Activated naive CD4-positive, alpha-beta T cell treated with anti-CD3 and anti-CD28 coated beads, Interleukin-2, amount 10 ng/mL, durations not matched to agents 7 days and 5 days (primary cell): ENCODE measurements at regions of chr3 and their contacts with region 1.

Region 1: GRCh38 chr3:37967260-37967881 is 23.2 kb upstream of the VILL start:
- DNase-seq: peak; percentile 76
- H3K4me3 Mint-ChIP-seq: no peak overlapping the region
- H3K27ac Mint-ChIP-seq: no peak overlapping the region
- H3K4me1 Mint-ChIP-seq: no peaks in the 10 kb centered on the region
- H3K27me3 Mint-ChIP-seq: peaks cover 13% of the 10 kb centered on the region

Region 2: DNA sequence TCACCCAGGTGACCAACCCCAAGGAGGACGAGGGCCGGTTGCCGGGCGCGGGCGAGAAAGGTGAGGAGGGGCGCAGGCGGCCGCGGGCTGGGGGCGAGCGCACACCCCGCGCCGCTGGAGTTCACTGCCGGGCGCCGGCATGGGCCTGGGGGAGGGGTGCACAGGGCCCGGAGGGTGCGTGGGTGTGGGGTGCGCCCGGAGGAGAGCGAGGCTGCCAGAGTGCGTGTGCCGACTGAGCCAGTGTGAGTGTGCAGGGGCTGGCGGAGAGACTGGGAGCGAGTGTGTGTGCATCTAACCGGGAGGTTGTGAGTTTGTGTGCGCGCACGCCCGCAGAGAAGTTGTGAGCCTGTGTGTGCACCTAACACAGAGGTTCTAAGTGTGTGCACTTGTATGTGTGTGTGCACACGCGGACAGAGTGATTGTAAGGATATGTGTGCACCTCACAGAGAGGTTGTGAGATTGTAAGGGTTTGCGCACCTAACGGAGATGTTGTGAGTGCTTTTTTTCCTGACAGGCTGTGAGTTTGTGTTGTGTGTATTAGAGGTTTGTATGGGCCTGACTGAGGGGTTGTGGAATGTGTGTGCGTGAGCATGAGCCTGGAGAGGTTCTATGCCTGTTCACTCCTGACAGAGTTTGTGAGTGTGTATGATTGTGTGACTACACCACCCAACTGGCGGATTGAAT is 105.0 kb before region 1 on chr3:
- CTCF ChIA-PET with region 1: interaction called, 37 read pairs
- DNase-seq: peak; percentile 43
- H3K4me3 Mint-ChIP-seq: peak overlapping the region; percentile 78
- H3K27ac Mint-ChIP-seq: no peak overlapping the region
- H3K4me1 Mint-ChIP-seq: peaks cover 19% of the 10 kb centered on the region
- H3K27me3 Mint-ChIP-seq: peaks cover 46% of the 10 kb centered on the region

Region 3: GRCh38 chr3:37904601-37905000 is 62.8 kb before region 1 on chr3:
- CTCF ChIA-PET with region 1: interaction called, 19 read pairs
- DNase-seq: no peak
- H3K4me3 Mint-ChIP-seq: no peak overlapping the region
- H3K27ac Mint-ChIP-seq: no peak overlapping the region
- H3K4me1 Mint-ChIP-seq: peaks cover 32% of the 10 kb centered on the region
- H3K27me3 Mint-ChIP-seq: peaks cover 21% of the 10 kb centered on the region

Region 4: DNA sequence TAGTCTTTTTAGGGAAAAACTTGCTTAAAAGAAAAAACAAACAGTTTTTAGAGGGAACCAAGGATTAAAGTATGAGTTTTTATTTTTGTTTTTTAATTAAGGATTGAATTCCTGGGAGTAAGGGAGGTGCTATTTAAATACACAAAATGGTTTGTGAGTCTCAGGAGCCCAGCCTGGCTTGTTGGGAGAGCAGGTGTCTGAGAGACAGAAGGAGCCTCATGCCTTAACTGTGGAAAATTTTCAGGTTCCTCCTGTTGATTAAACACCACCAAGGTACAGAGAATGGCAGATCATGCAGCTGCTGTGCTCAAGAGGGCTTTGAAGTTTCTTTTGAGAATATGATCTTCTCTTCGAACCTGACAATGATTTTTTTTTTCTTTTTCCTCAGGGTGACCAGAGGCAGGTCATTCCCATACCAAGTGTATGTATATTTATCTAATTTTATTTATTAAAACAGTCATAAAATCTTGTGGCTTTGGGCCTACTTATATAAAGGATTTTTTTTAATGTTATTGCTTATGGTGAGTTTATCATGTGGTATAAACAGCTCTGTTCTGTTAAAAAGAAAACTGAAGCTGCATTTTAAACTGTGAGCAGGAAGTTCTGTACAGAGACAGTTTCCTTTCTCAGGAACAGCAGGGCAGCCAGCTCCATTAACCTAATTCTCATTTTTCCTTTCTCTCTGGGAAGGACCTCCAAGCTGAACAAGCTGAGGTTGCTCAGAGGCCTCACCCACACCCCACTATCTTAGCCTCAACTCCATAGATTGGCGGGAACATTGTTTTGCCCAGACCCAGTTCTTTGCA is 10.4 kb before region 1 on chr3:
- CTCF ChIA-PET with region 1: interaction called, 21 read pairs
- DNase-seq: no peak
- H3K4me3 Mint-ChIP-seq: peak overlapping the region; percentile 1
- H3K27ac Mint-ChIP-seq: peak overlapping the region; percentile 89
- H3K4me1 Mint-ChIP-seq: peaks cover 25% of the 10 kb centered on the region
- H3K27me3 Mint-ChIP-seq: no peaks in the 10 kb centered on the region